PC-3 (cell line): ENCODE measurements at regions of chr17 and their contacts with region 1.

Region 1: DNA sequence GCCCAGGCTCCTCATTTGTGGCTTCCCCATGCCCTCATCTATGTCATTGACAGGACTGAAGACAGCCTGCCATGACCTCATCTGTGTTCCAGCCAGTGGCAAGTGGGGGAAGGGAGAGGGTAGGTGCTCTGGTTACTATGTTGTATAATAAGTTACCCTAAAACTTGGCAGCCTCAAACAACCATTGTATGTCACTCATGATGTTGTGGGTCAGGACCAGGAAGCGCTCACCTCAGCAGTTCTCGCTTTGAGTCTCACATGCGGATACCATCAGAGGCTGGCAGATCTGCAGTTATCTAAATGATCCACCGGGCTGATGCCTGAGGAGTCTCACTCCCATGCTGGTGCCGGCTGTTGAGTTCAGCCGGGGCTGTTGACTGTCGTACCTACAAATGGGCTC is 89.0 kb upstream of the TMEM97 start:
- DNase-seq: no peak
- ATAC-seq: no peak
- H3K4me3 ChIP-seq: no peak overlapping the region
- H3K27ac ChIP-seq: no peak overlapping the region
- H3K4me1 ChIP-seq: peaks cover 8% of the 10 kb centered on the region
- H3K27me3 ChIP-seq: no peaks in the 10 kb centered on the region
- CTCF ChIP-seq: no peak

Region 2: GRCh38 chr17:28327031-28327607 is 97.1 kb after region 1 on chr17:
- CTCF ChIA-PET with region 1: interaction called, 4 read pairs
- POLR2A ChIA-PET with region 1: no interaction called
- intact Hi-C with region 1: loop called (anchors 5 kb)
- DNase-seq: peak; percentile 66
- ATAC-seq: peak; percentile 85
- H3K4me3 ChIP-seq: peak overlapping the region; percentile 24
- H3K27ac ChIP-seq: peak overlapping the region; percentile 94
- H3K4me1 ChIP-seq: peaks cover 53% of the 10 kb centered on the region
- H3K27me3 ChIP-seq: no peaks in the 10 kb centered on the region
- CTCF ChIP-seq: no peak